ENCODE measurements at regions of chr3 and their contacts with region 1.

Region 1: DNA sequence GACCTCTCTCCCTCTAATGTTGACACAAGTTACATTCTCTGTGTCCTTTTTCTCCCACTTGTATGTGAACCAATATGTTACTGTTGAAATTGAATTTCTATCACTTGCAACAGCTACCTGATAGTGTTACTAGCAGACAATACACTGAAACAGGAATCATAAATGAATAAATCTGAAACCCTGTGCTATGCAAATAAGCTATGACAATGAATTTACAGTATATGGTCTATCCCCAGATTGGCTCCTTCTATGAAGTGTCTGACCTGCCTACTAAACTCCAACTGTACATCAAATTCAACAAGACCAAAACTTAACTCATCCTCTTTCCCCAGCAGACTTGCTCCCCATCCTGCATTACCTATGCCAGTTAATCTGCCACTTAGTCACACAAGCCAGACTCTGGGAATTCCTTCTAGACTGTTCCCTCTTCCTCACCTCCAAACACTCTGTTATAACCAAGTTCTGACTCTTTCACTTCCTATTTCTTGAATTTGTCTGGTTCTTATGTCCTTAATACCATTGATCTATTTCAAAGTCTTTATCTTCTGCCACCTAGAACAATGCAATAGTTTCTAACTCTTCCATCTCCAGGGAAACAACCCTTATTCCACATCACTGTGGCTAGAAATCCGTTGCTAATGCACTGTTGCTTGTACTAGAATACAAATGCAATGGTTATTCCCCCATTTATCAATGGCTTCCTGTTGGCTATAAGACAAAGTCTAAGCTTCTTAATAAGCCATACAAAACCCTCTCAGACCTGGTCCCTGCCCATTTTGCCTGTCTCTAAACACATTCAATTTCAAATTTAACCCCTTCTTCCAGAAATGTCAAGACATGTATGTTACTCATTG is 13.4 kb upstream of the ZNF639 start:
- DNase-seq: no peak
- H3K4me3 ChIP-seq: no peak overlapping the region
- H3K27ac ChIP-seq: no peak overlapping the region
- H3K4me1 ChIP-seq: no peaks in the 10 kb centered on the region
- H3K27me3 ChIP-seq: no peaks in the 10 kb centered on the region
- CTCF ChIP-seq: no peak
- POLR2A ChIP-seq: no peak

Region 2: GRCh38 chr3:177928156-177928873 is 1381.1 kb before region 1 on chr3:
- intact Hi-C with region 1: no loop called
- DNase-seq: no peak
- H3K4me3 ChIP-seq: no peak overlapping the region
- H3K27ac ChIP-seq: no peak overlapping the region
- H3K4me1 ChIP-seq: no peaks in the 10 kb centered on the region
- H3K27me3 ChIP-seq: no peaks in the 10 kb centered on the region
- CTCF ChIP-seq: no peak
- POLR2A ChIP-seq: no peak

Region 3: GRCh38 chr3:179147873-179148615 is 161.4 kb before region 1 on chr3 and contains the start of gene PIK3CA:
- intact Hi-C with region 1: loop called (anchors 10 kb)
- DNase-seq: peak; percentile 91 to 97
- H3K4me3 ChIP-seq: peak within 1 kb of the TSS; percentile 94 to 99 (median 97)
- H3K27ac ChIP-seq: peak within 1 kb of the TSS; percentile 98 to 99
- H3K4me1 ChIP-seq: peaks cover 0 to 12% of the 10 kb centered on the region in 2 donors
- H3K27me3 ChIP-seq: no peaks in the 10 kb centered on the region
- CTCF ChIP-seq: peak in 1 of 3 donors; percentile 11
- POLR2A ChIP-seq: no peak
- total RNA-seq, gene PIK3CA: 34.1 to 43.0 (median 38.4) TPM

Region 4: DNA sequence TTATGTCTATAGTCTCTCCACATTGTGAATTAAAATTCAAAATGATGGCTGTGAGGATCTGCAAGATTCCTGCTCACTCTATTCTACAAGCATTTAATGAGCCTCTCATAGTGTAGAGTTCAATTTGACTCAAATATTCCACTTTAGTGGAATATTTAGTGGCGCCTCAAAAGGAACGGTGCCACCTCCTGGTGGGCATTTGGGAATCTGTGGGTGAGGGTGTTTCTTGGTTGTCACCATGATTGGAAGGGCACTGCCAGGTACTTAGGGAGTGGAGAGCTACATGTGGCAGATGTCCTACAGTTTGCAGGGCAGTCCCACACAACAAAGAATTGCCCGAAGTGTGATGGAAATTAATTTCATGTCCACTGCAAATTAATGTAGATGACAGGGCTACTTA is 37.1 kb before region 1 on chr3:
- intact Hi-C with region 1: no loop called
- DNase-seq: no peak
- H3K4me3 ChIP-seq: no peak overlapping the region
- H3K27ac ChIP-seq: no peak overlapping the region
- H3K4me1 ChIP-seq: no peaks in the 10 kb centered on the region
- H3K27me3 ChIP-seq: no peaks in the 10 kb centered on the region
- CTCF ChIP-seq: no peak
- POLR2A ChIP-seq: no peak

Region 5: GRCh38 chr3:179297971-179298725 is 11.3 kb before region 1 on chr3:
- intact Hi-C with region 1: no loop called
- DNase-seq: no peak
- H3K4me3 ChIP-seq: no peak overlapping the region
- H3K27ac ChIP-seq: no peak overlapping the region
- H3K4me1 ChIP-seq: no peaks in the 10 kb centered on the region
- H3K27me3 ChIP-seq: no peaks in the 10 kb centered on the region
- CTCF ChIP-seq: no peak
- POLR2A ChIP-seq: no peak